HEK293 (cell line): ENCODE measurements at regions of chr1 and their contacts with region 1.

Region 1: DNA sequence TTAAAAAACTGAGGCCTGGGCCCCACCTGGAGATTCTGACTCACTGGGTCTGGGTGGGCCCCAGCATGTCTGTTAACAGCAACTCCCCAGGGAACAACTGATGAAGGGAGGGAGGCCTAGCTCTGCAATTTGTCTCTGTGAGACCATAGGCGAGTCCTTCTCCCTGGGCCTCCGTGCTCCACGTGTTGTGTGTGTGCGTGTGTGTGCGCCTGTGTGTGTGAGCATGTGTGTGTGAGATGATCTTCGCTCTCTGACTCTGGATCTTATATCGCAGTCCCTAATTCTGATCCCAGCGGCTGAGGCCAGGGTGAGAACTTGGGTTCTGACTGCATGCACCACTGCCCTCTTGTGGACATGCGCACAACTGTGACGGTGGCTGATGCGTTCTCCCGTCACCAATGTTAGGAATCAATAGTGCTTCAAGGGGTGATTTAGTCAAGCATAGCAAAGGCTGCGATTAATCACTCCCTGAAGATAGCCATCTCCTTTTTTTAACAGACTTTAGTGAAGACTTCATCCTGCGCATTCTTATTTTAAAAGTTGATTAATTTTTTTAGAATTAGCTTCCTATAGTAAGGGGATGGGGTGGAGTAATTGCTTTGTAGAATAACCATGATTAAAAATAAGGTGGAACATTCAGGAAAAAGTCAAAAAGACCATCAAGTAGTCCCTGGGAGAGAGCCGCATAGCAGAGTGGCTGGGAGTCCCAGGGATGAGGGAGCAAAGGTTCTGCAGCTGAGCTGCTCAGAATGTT is 62.4 kb upstream of the USP24 start:
- H3K4me3 ChIP-seq: no peak overlapping the region
- H3K27ac ChIP-seq: no peak overlapping the region
- H3K4me1 ChIP-seq: peaks cover 3% of the 10 kb centered on the region; the same call in 1 of the 2 replicates
- CTCF ChIP-seq: peak; percentile 93

Region 2: GRCh38 chr1:55134152-55134808 is 143.3 kb before region 1 on chr1:
- CTCF ChIA-PET with region 1: interaction called, 109 read pairs
- POLR2A ChIA-PET with region 1: no interaction called
- H3K4me3 ChIP-seq: no peak overlapping the region
- H3K27ac ChIP-seq: no peak overlapping the region
- H3K4me1 ChIP-seq: no peaks in the 10 kb centered on the region
- CTCF ChIP-seq: no peak

Region 3: DNA sequence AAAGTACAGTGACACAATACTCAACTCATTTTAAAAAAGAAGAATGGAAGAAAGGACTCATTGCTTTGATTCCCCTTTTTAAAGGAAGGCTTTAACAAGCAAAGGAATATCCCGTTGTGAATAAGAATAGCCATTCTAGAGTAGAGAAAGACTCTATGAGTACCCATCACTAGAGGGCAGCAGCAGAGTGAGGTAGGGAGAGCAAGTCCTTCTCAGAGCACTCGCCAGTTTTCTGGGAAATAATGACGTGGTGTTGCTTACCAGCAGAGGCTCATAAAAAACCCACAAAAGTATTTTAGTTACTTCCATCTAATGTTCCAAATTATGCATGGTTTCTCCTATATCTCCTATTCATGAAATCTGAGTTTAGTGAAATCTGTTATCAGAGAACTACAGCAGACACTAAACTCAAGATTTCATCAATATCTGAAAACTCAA is 137.0 kb before region 1 on chr1:
- CTCF ChIA-PET with region 1: interaction called, 109 read pairs
- POLR2A ChIA-PET with region 1: no interaction called
- H3K4me3 ChIP-seq: no peak overlapping the region
- H3K27ac ChIP-seq: no peak overlapping the region
- H3K4me1 ChIP-seq: no peaks in the 10 kb centered on the region
- CTCF ChIP-seq: peak; percentile 43; the same call in 1 of the 2 replicates

Region 4: GRCh38 chr1:55164906-55165305 is 112.6 kb before region 1 on chr1:
- CTCF ChIA-PET with region 1: interaction called, 10 read pairs
- POLR2A ChIA-PET with region 1: no interaction called
- H3K4me3 ChIP-seq: no peak overlapping the region
- H3K27ac ChIP-seq: no peak overlapping the region
- H3K4me1 ChIP-seq: no peaks in the 10 kb centered on the region; the same call in 1 of the 2 replicates
- CTCF ChIP-seq: no peak

Region 5: DNA sequence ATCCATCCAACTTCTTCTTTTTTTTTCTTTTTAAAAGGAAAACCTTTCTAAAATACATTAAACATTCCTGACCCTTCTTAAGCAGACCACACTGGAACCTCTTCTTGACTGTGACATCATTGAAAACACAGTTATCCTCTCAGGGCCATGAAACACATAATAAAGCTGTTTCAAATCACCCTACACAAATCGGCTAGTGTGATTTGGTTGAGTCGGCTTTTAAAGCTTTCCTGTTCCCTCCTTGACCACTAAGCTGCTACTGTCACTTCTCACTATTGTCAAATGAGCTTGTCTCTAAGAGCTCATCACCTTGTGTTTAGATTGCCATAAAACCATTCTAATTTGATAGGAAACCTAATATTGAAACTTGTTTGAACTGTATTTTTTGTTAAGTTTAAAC is 68.3 kb before region 1 on chr1:
- CTCF ChIA-PET with region 1: interaction called, 14 read pairs
- POLR2A ChIA-PET with region 1: no interaction called
- H3K4me3 ChIP-seq: no peak overlapping the region
- H3K27ac ChIP-seq: no peak overlapping the region
- H3K4me1 ChIP-seq: peaks cover 34% of the 10 kb centered on the region
- CTCF ChIP-seq: no peak